Activated naive CD4-positive, alpha-beta T cell treated with anti-CD3 and anti-CD28 coated beads for 36 hours (primary cell): ENCODE measurements at regions of chr4 and their contacts with region 1.

Region 1: DNA sequence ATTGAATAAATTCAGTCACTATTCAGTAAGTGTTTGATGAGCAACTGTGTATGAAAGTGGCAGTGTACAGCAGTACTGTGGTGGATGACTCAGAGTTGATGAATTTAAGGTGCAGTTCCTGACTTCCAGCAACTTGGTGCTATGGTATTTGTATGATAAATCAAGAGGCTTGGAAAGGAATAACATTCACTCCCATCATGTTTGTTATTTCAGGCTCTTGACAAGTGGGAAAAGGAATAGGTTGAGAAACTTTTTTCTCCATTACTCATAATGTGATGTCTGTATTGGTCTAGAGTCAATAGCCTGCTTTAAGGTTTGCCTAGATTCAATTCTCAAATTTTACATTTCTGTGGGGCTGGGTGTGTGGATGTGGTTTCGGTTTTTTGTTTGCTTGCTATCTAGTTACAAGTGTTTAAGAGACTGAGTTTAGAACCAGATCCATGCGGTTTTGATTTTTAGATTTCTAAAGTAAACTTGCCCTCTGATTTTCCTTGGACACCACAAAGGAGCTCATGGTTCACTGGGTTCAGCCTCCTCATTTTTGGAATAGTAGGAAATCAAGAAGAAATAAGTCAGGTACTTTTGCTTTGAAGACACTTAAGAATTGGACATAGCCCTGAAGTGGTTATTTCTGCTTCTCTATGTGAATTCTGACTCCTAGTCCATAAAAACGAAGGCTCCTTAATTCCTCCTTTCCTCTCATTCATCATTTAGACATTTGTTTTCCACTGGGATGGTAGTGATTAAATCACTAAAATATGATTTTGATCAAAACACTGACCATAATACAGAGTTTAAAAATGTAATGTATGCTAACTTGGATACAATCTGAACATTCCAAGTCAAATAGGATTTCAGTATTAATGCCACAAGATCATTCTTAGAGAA is 34.9 kb upstream of the CYP2U1 start:
- DNase-seq: peak; percentile 39
- H3K4me3 Mint-ChIP-seq: no peak overlapping the region
- H3K27ac Mint-ChIP-seq: no peak overlapping the region
- H3K4me1 Mint-ChIP-seq: peaks cover 16% of the 10 kb centered on the region
- H3K27me3 Mint-ChIP-seq: peaks cover 31% of the 10 kb centered on the region

Region 2: DNA sequence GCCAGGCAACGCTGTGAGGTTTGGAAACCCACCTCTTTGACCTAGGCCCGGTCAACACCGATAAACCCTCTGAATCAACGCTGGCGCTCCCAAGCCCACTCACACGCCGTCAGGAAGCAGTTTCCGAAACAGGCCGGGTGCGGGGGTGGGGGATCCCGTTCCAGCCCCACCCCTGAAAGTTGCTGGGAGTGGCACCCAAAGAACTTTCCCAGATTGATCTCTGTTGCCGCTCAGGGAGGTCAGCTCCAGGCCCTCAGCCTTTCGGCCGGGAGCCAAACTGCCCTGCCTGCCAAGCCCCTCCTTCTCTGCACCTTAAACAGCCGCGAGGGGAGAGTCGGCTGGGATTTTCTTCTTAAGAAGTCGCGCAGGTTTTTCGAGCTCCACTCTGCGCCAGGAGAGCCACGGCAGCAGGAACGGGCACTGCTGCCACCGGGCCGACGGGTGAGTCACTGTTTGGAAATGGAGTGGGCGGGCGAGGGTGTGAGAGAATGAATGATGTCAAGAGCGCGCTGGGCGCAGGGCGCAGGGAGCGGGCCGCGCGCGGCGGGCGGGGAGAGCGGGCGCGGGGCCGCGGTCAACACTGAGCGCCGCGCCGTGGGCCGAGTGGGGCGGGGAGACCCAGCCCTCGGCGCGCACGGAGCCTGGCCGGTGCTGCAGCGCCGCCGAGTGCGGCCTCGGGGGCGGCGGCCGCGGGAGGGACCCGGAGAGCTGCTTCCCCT is 71.9 kb before region 1 on chr4 and contains the start of gene SGMS2:
- CTCF ChIA-PET with region 1: no interaction called
- intact Hi-C with region 1: loop called (anchors 2 kb)
- DNase-seq: peak; percentile 85
- H3K4me3 Mint-ChIP-seq: peak within 1 kb of the TSS; percentile 78
- H3K27ac Mint-ChIP-seq: no peak within 1 kb of the TSS
- H3K4me1 Mint-ChIP-seq: peaks cover 9% of the 10 kb centered on the region
- H3K27me3 Mint-ChIP-seq: peaks cover 44% of the 10 kb centered on the region
- total RNA-seq, gene SGMS2: 0.07 TPM in 1 of 2 experiments, not detected in the other

Region 3: GRCh38 chr4:107843391-107843790 is 53.0 kb before region 1 on chr4:
- CTCF ChIA-PET with region 1: no interaction called
- intact Hi-C with region 1: no loop called
- DNase-seq: no peak
- H3K4me3 Mint-ChIP-seq: no peak overlapping the region
- H3K27ac Mint-ChIP-seq: no peak overlapping the region
- H3K4me1 Mint-ChIP-seq: no peaks in the 10 kb centered on the region
- H3K27me3 Mint-ChIP-seq: peaks cover 7% of the 10 kb centered on the region

Region 4: DNA sequence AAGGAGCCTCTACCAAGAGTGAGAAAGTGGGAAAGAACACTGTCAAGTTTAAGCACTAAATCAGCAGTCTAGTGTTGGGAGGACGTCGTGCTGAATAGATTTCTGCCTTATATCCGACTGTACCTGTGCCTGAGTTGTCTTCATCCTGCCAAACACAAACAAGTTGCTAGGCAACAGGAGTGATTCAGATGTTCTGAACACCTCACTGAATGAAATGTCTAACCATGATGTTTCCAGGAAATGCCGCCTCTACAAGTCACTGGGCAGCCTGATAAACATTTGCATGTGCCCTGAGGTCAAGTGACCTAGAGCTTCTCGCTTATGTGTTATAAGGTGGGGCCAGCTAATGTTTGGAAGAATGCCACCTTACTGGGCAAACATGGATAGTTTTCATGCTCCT is 33.7 kb before region 1 on chr4:
- CTCF ChIA-PET with region 1: no interaction called
- intact Hi-C with region 1: loop called (anchors 1 kb)
- DNase-seq: peak; percentile 20
- H3K4me3 Mint-ChIP-seq: no peak overlapping the region
- H3K27ac Mint-ChIP-seq: no peak overlapping the region
- H3K4me1 Mint-ChIP-seq: peaks cover 16% of the 10 kb centered on the region
- H3K27me3 Mint-ChIP-seq: peaks cover 21% of the 10 kb centered on the region

Region 5: DNA sequence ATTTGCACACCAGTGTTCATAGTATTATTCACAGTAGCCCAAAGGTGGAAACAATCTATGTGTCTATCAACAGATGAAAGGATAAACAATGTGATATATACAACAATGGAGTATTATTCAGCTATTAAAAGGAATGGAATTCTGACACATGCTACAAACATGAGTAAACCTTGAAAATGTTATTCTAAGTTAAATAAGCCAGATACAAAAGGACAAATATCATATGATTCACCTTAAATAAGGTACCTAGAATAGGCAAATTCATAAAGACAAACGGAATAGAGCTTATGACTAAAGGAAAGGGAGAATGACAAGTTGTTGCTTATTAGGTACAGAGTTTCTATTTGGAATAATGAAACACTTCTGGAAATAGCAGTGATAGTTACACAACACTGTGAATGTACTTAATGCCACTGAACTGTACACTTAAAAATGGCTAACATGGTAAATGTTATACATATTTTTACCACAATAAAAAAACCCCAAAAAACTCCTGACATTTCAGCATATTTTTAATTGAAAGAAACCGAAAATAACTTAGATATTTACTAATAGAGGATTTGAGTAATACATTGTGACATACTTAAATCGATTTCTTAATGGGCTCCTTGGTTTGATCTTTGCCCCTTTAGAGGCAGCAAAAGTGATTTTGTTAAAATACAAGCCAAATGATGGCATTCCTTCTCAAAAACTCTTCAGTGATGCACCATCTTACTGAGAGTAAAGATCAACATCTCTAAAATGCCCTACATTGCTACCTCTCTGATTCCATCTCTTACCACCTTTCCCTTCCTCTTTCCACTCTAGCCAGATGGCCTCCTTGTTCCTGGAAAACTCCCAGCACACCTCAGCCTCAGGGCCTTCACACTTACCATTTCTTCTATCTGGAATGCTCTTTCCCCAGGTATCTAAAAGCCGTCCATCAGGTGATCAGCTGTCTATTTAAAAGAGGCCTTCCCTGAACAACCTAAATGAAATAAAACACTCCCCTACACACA is 26.4 kb after region 1 on chr4:
- CTCF ChIA-PET with region 1: no interaction called
- intact Hi-C with region 1: loop called (anchors 1 kb)
- DNase-seq: no peak
- H3K4me3 Mint-ChIP-seq: no peak overlapping the region
- H3K27ac Mint-ChIP-seq: no peak overlapping the region
- H3K4me1 Mint-ChIP-seq: no peaks in the 10 kb centered on the region
- H3K27me3 Mint-ChIP-seq: peaks cover 8% of the 10 kb centered on the region

Region 6: DNA sequence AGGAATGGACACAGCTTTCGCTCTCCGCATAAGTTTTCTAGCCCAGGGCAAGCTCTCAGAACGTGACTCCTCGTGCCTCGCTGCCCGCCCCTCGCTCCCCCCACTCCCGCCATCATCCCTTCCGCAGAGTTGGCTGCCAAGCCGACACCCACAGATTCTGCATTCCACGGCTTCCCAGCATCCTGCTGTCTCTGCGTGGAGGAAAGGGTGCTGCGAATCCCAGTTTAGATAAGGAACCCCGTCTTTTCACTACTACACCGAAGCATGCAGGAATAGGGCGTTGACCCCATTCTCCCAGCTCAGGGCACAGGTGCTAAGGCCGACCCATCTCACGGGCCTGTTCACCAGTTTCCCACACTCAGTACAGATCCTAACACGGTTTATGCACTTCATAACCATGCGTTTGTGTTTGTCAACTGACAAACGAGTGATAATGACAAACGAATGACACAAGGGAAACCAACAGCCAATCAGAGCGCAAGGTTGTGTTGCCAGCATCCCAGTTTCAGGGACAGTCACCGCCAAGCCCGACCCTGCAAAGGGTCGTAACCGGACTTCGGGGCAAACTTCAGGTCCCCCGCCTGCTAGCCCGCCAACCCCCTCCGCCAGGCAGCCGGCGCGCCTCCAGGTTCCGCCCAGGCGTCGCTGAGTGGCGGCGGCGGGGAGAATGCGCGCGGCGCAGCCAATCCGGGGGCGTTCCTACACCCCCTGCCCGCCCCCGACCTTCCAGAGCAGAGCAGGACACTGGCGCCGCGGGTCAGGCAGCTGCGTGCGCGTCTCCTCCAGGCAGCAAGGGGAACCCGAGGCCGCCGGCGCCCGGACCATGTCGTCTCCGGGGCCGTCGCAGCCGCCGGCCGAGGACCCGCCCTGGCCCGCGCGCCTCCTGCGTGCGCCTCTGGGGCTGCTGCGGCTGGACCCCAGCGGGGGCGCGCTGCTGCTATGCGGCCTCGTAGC is 34.7 kb after region 1 on chr4 and contains the start of gene CYP2U1:
- CTCF ChIA-PET with region 1: no interaction called
- intact Hi-C with region 1: loop called (anchors 2 kb)
- DNase-seq: peak; percentile 78
- H3K4me3 Mint-ChIP-seq: peak within 1 kb of the TSS; percentile 83
- H3K27ac Mint-ChIP-seq: no peak within 1 kb of the TSS
- H3K4me1 Mint-ChIP-seq: peaks cover 15% of the 10 kb centered on the region
- H3K27me3 Mint-ChIP-seq: no peaks in the 10 kb centered on the region
- total RNA-seq, gene CYP2U1: 1.5 to 1.8 TPM

Region 7: DNA sequence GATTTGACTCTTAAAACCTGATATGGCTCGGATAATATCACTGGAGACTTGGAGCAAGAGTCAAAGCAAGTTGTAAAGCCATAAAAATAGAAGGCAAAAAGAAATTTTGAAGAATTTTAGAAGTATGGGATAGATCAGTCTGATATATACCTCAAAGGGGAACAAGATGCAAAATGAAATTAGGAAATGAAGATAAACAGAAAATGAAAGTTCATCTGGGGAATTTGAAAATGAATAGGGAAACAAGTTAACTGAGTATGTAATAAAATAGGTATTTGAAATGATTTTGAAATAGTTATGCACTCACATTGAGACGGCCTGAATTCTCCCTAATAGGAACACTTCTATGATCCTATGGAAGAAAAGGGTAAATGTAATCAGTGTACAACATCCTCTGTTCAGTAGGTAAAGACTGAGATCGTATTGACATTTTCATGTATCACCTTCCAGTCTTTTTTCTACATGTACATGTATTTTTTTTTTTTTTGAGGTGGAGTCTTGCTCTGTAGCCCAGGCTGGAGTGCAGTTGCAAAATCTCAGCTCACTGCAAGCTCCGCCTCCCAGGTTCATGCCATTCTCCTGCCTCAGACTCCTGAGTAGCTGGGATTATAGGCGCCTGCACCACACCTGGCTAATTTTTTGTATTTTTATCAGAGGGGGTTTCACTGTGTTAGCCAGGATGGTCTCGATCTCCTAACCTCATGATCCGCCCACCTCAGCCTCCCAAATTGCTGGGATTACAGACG is 40.8 kb after region 1 on chr4:
- CTCF ChIA-PET with region 1: no interaction called
- intact Hi-C with region 1: loop called (anchors 2 kb)
- DNase-seq: no peak
- H3K4me3 Mint-ChIP-seq: no peak overlapping the region
- H3K27ac Mint-ChIP-seq: no peak overlapping the region
- H3K4me1 Mint-ChIP-seq: peaks cover 21% of the 10 kb centered on the region
- H3K27me3 Mint-ChIP-seq: no peaks in the 10 kb centered on the region